H1 (cell line): ENCODE measurements at regions of chr10 and their contacts with region 1.

Region 1: DNA sequence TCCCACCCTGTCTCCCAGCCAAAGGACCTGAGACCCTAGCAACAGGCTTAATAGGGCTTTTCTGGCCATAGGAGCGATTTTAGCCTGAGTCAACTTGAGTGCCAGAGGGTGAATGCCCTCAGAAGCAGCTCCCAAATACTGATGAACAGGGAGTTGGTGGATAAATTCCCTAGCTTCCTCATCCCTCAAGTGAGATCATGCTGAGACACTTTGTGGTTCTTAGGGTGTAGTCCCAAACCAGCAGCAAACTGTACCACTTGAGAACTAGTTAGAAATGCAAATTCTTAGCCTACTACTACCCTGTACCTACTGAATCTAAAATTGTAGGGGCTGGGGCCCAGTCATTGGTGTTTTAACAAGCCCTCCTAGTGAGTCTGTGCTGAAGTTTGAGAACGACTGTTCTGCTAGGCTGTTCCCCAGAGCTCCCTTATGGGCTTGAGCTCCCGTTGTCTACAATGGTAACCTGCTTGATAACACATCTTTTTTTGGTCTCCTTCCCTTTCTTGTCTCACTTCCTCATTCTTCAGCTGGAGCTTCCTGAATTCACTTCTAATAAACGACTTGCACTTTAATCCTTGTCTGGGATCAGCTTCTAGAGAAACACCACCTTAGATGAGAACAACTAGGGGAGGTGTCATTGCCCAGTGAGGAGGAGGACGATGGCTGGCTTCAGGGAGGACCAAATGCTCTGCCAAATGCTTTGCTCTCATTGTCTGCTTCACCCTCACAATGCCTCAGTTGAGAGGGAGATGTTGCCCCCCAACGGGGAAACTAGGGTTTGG is 18.2 kb upstream of the CDH23 start:
- DNase-seq: no peak
- H3K4me3 ChIP-seq: no peak overlapping the region
- H3K27ac ChIP-seq: no peak overlapping the region
- H3K4me1 ChIP-seq: peaks cover 0 to 2% (median 0%) of the 10 kb centered on the region in 4 experiments; a peak in 2 of 7 replicates
- H3K27me3 ChIP-seq: no peaks in the 10 kb centered on the region
- CTCF ChIP-seq: no peak
- EP300 ChIP-seq: no peak
- POLR2A ChIP-seq: no peak
- RAD21 ChIP-seq: no peak

Region 2: GRCh38 chr10:71343392-71343773 is 35.1 kb before region 1 on chr10:
- CTCF ChIA-PET with region 1: interaction called, 28 read pairs
- POLR2A ChIA-PET with region 1: interaction called, 3 read pairs
- DNase-seq: no peak
- H3K4me3 ChIP-seq: no peak overlapping the region
- H3K27ac ChIP-seq: peak overlapping the region; percentile 60; the same call in 1 of the 2 replicates
- H3K4me1 ChIP-seq: peaks cover 19 to 34% (median 27%) of the 10 kb centered on the region in 4 experiments
- H3K27me3 ChIP-seq: no peaks in the 10 kb centered on the region
- CTCF ChIP-seq: no peak
- EP300 ChIP-seq: no peak
- POLR2A ChIP-seq: no peak
- RAD21 ChIP-seq: no peak

Region 3: GRCh38 chr10:71351628-71352319 is 26.8 kb before region 1 on chr10:
- CTCF ChIA-PET with region 1: interaction called, 28 read pairs
- POLR2A ChIA-PET with region 1: interaction called, 3 read pairs
- DNase-seq: no peak
- H3K4me3 ChIP-seq: no peak overlapping the region
- H3K27ac ChIP-seq: no peak overlapping the region
- H3K4me1 ChIP-seq: peaks cover 0 to 16% (median 7%) of the 10 kb centered on the region in 4 experiments; a peak in 4 of 7 replicates
- H3K27me3 ChIP-seq: no peaks in the 10 kb centered on the region
- CTCF ChIP-seq: no peak
- EP300 ChIP-seq: no peak
- POLR2A ChIP-seq: no peak
- RAD21 ChIP-seq: no peak